Spleen (tissue), 13 donors: ENCODE measurements at regions of chr12 and their contacts with region 1.

Region 1: DNA sequence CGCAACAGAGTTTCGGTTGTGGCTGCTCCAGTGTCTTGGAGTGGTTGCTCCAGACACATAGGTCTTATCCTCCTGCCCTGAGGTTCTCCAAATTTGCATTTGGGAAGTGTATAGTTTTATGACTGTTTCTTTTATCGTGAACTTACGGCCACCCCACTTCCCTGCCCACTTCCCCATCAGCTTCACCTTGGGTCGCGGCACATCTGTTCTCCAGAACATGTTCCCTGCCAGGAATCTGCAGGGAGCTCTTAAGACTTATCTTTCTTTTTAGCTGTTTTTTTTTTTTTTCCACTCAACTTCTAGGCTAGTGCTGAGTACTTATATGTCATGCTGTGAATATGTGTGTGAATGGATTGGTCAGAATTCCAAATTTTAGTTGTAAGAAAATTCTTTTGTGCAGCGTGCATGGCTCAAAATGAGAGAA is 75.4 kb downstream of the ETV6 start:
- DNase-seq: no peak
- H3K4me3 ChIP-seq: no peak overlapping the region
- H3K27ac ChIP-seq: peak overlapping the region in 6 of 8 donors; percentile 3 to 80 (median 20)
- H3K4me1 ChIP-seq: peaks cover 38 to 99% (median 85%) of the 10 kb centered on the region in 6 donors
- H3K27me3 ChIP-seq: no peaks in the 10 kb centered on the region
- CTCF ChIP-seq: no peak
- POLR2A ChIP-seq: no peak

Region 2: GRCh38 chr12:11649703-11650521 is 75.0 kb before region 1 on chr12:
- intact Hi-C with region 1: loop called (anchors 5 kb)
- DNase-seq: peak; percentile 88
- H3K4me3 ChIP-seq: peak overlapping the region; percentile 50 to 84 (median 80)
- H3K27ac ChIP-seq: peak overlapping the region; percentile 76 to 97 (median 96)
- H3K4me1 ChIP-seq: peaks cover 30 to 52% (median 41%) of the 10 kb centered on the region in 6 donors
- H3K27me3 ChIP-seq: no peaks in the 10 kb centered on the region
- CTCF ChIP-seq: no peak
- POLR2A ChIP-seq: peak in 1 of 3 donors; percentile 58

Region 3: GRCh38 chr12:11869941-11870540 is 145.1 kb after region 1 on chr12:
- intact Hi-C with region 1: no loop called
- DNase-seq: no peak
- H3K4me3 ChIP-seq: no peak overlapping the region
- H3K27ac ChIP-seq: no peak overlapping the region
- H3K4me1 ChIP-seq: peaks cover 0 to 8% (median under 1%) of the 10 kb centered on the region in 6 donors
- H3K27me3 ChIP-seq: no peaks in the 10 kb centered on the region
- CTCF ChIP-seq: no peak
- POLR2A ChIP-seq: no peak